PC-9 (cell line): ENCODE measurements at regions of chr3 and their contacts with region 1.

Region 1: DNA sequence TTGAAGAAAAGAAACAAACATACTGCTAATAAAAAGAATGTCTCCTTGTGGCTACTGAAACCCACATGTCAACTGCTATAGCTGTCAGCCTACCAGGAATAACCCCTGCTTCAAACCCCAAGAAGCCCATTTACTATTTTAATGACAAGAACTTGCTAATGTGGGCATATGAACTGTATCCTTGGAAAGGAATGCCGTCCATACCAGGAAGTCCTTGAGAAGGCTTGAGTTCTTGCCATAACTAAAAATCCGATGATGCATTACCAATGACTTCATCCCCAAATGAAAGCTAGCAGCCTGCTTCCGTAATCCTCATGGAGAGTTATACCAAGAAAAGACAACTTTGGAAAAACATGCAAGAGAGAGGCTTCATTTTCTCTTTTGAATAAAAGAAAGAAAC is 34.8 kb downstream of the MINDY4B start:
- DNase-seq: no peak
- H3K4me3 ChIP-seq: no peak overlapping the region
- H3K27ac ChIP-seq: no peak overlapping the region
- H3K4me1 ChIP-seq: peaks cover 5% of the 10 kb centered on the region; the same call in 1 of the 2 replicates
- H3K27me3 ChIP-seq: no peaks in the 10 kb centered on the region
- CTCF ChIP-seq: no peak

Region 2: DNA sequence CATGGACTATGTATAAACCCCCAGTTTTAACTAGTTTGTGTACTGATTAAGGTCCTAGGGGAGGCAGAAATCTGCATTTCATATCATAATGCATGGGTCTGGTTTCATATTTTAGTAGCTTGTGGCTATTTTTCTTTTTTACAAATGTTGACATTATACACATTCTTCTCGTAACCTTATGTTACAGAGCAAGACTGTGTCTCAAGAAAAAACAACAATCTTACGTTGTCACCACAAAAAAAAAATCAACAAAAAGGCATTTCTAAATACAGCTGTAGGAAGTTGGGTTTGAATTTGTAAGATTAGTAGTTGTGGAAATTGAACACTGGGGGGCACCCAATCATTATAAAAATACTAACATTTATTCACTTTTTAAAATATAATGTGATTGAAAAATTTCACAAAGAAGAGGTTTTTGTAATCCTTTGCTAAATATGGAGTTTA is 342.0 kb before region 1 on chr3:
- CTCF ChIA-PET with region 1: no interaction called
- POLR2A ChIA-PET with region 1: no interaction called
- intact Hi-C with region 1: loop called (anchors 5 kb)
- DNase-seq: peak in 1 of 2 experiments; percentile 38
- H3K4me3 ChIP-seq: no peak overlapping the region
- H3K27ac ChIP-seq: no peak overlapping the region
- H3K4me1 ChIP-seq: no peaks in the 10 kb centered on the region
- H3K27me3 ChIP-seq: no peaks in the 10 kb centered on the region
- CTCF ChIP-seq: peak; percentile 59

Region 3: GRCh38 chr3:150589759-150590158 is 280.6 kb before region 1 on chr3:
- CTCF ChIA-PET with region 1: no interaction called
- POLR2A ChIA-PET with region 1: no interaction called
- intact Hi-C with region 1: loop called (anchors 5 kb)
- DNase-seq: no peak
- H3K4me3 ChIP-seq: no peak overlapping the region
- H3K27ac ChIP-seq: no peak overlapping the region
- H3K4me1 ChIP-seq: no peaks in the 10 kb centered on the region
- H3K27me3 ChIP-seq: no peaks in the 10 kb centered on the region
- CTCF ChIP-seq: no peak

Region 4: GRCh38 chr3:150787741-150788370 is 82.5 kb before region 1 on chr3:
- CTCF ChIA-PET with region 1: interaction called, 3 read pairs
- POLR2A ChIA-PET with region 1: no interaction called
- intact Hi-C with region 1: loop called (anchors 1 kb)
- DNase-seq: peak in 1 of 2 experiments; percentile 55
- H3K4me3 ChIP-seq: no peak overlapping the region
- H3K27ac ChIP-seq: no peak overlapping the region
- H3K4me1 ChIP-seq: peaks cover 18% of the 10 kb centered on the region
- H3K27me3 ChIP-seq: no peaks in the 10 kb centered on the region
- CTCF ChIP-seq: peak; percentile 51